ENCODE measurements at regions of chr2 and their contacts with region 1.

Region 1: DNA sequence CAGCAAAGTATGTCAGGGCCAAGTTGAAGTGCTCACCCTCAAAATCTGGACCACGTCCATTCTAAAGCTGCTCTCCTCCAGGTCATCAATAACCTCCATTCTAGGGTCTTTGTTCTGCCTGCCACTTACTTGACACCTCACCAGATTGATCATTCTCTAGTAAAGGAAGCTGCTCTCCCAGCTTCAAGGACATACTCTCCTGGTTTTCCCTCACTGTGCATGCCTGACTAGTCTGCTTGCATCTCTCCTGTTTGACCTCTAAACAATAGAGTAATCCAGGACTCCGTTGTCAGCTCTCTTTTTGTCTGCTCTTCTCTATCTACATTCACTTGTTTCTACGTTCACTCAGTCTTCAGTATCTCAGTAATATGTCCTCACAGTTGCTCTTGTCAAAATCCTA is 59.1 kb downstream of the FRZB start:
- DNase-seq: no peak
- H3K4me3 ChIP-seq: no peak overlapping the region
- H3K27ac ChIP-seq: no peak overlapping the region
- H3K4me1 ChIP-seq: no peaks in the 10 kb centered on the region
- H3K27me3 ChIP-seq: no peaks in the 10 kb centered on the region
- CTCF ChIP-seq: no peak
- EP300 ChIP-seq: no peak
- POLR2A ChIP-seq: no peak
- RAD21 ChIP-seq: no peak

Region 2: GRCh38 chr2:182784777-182785176 is 22.5 kb before region 1 on chr2:
- CTCF ChIA-PET with region 1: interaction called, 23 read pairs
- POLR2A ChIA-PET with region 1: no interaction called
- DNase-seq: no peak
- H3K4me3 ChIP-seq: no peak overlapping the region
- H3K27ac ChIP-seq: no peak overlapping the region
- H3K4me1 ChIP-seq: no peaks in the 10 kb centered on the region
- H3K27me3 ChIP-seq: no peaks in the 10 kb centered on the region
- CTCF ChIP-seq: peak in 2 of 3 experiments; percentile 43 to 55; a peak in 2 of 4 replicates
- EP300 ChIP-seq: no peak
- POLR2A ChIP-seq: no peak
- RAD21 ChIP-seq: peak; percentile 77 to 78

Region 3: DNA sequence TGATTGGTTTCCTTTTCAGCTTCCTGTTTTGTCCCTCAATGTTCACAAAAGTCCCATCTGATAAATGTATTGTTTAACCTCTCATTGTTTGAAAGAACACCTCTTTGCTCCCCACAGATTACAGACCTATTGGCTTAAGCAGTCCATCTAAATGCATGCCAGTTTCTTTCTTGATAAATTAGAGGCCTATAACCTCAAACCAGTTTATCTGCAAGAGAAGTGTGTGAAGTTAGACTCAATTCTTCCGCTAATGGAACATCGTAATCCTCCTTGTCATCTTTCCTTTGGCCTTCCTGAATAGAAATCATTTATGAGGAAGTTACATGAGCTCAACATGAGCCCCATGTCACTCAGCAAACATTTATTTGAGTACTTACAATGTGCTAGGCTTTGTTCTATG is 14.9 kb before region 1 on chr2:
- CTCF ChIA-PET with region 1: interaction called, 8 read pairs
- POLR2A ChIA-PET with region 1: interaction called, 11 read pairs
- DNase-seq: no peak
- H3K4me3 ChIP-seq: no peak overlapping the region
- H3K27ac ChIP-seq: no peak overlapping the region
- H3K4me1 ChIP-seq: no peaks in the 10 kb centered on the region
- H3K27me3 ChIP-seq: no peaks in the 10 kb centered on the region
- CTCF ChIP-seq: no peak
- EP300 ChIP-seq: no peak
- POLR2A ChIP-seq: no peak
- RAD21 ChIP-seq: no peak

Measured in H1 (cell line).